ENCODE measurements at regions of chr2 and their contacts with region 1.

Region 1: GRCh38 chr2:159098815-159099455 is 130.5 kb downstream of the TANC1 start:
- DNase-seq: peak; percentile 91
- ATAC-seq: peak; percentile 71
- H3K4me3 ChIP-seq: peak overlapping the region; percentile 47
- H3K27ac ChIP-seq: peak overlapping the region; percentile 98
- H3K4me1 ChIP-seq: peaks cover 41% of the 10 kb centered on the region
- H3K27me3 ChIP-seq: no peaks in the 10 kb centered on the region
- CTCF ChIP-seq: no peak

Region 2: GRCh38 chr2:158828493-158829164 is 270.3 kb before region 1 on chr2:
- CTCF ChIA-PET with region 1: no interaction called
- POLR2A ChIA-PET with region 1: no interaction called
- intact Hi-C with region 1: no loop called
- DNase-seq: no peak
- ATAC-seq: no peak; the same call in 1 of the 2 replicates
- H3K4me3 ChIP-seq: no peak overlapping the region
- H3K27ac ChIP-seq: no peak overlapping the region
- H3K4me1 ChIP-seq: no peaks in the 10 kb centered on the region
- H3K27me3 ChIP-seq: no peaks in the 10 kb centered on the region
- CTCF ChIP-seq: no peak

Region 3: GRCh38 chr2:159083566-159084202 is 15.3 kb before region 1 on chr2:
- CTCF ChIA-PET with region 1: no interaction called
- POLR2A ChIA-PET with region 1: no interaction called
- intact Hi-C with region 1: loop called (anchors 1 kb)
- DNase-seq: peak; percentile 93
- ATAC-seq: peak; percentile 83
- H3K4me3 ChIP-seq: peak overlapping the region; percentile 1; the same call in 1 of the 2 replicates
- H3K27ac ChIP-seq: peak overlapping the region; percentile 93
- H3K4me1 ChIP-seq: peaks cover 33% of the 10 kb centered on the region
- H3K27me3 ChIP-seq: no peaks in the 10 kb centered on the region
- CTCF ChIP-seq: no peak

Region 4: DNA sequence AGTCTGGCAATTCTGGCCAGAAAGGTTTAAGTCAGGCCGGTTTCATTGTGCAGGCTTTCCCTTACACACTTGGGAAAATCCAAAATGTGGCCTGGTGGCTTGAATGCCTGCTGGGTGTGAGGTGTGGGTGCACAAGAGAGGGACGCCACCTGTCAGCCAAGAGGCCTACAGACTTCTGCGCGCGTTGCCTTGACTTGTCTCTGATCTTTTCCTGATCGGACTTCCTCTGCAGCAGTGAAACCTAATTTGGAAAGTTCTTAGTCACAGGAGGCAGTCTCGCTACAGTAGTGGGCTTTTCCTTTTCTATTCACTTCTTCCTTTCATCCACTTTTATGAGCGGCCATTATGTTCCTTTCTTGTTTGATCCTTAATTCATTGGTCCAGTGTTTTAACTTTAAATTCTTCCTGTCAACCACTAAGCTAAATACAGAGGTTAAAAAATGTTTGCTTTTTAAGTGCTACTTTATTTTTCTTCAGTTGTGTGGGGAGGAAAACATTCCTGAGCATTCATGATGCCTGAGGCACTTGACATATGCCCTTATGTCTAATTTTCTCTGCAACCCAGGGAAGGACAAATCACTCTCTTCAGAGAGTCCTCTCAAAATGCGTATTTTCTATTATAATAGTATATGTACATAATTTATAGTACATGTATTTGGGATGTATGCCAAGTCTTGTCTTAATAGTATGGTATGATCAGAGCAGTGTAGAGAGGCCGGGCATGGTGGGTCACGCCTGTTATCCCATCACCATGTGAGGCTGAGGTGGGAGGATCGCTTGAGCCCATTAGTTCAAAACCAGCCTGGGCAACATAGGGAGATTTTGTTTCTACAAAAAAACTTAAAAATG is 58.6 kb after region 1 on chr2:
- CTCF ChIA-PET with region 1: no interaction called
- POLR2A ChIA-PET with region 1: no interaction called
- intact Hi-C with region 1: no loop called
- DNase-seq: no peak
- ATAC-seq: no peak
- H3K4me3 ChIP-seq: no peak overlapping the region
- H3K27ac ChIP-seq: no peak overlapping the region
- H3K4me1 ChIP-seq: peaks cover 28% of the 10 kb centered on the region
- H3K27me3 ChIP-seq: no peaks in the 10 kb centered on the region
- CTCF ChIP-seq: no peak

Measured in PC-3 (cell line).